HEK293 (cell line): ENCODE measurements at regions of chr7 and their contacts with region 1.

Region 1: GRCh38 chr7:45917658-45918057 is 3.4 kb downstream of the IGFBP3 start:
- H3K4me3 ChIP-seq: no peak overlapping the region
- H3K27ac ChIP-seq: no peak overlapping the region
- H3K4me1 ChIP-seq: no peaks in the 10 kb centered on the region; the same call in 1 of the 2 replicates
- CTCF ChIP-seq: peak; percentile 46; the same call in 1 of the 2 replicates

Region 2: DNA sequence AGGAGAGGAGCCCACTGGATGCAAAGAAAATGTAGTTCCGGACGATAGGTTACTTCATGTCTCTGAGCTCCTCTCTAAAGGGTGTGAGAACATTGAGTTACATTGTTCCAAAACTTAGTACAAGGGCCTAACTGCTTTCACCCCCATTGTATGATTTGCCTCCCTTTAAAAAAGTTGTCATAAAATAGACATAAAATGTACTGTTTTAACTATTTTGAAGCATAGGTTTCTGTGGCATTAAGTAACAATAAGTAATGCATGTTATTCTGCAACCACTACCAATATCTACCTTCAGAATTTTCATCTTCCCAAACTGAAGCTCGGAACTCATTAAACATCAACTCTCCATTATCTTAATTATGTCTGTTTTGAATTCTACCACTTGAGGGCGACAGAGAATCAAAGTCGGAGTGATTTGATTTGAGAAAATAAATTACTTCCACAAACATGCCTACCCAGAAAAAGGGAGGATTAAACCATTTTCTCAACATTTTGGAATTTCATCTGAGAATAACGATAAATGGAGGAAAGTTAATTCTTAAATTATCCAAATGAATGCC is 26.7 kb before region 1 on chr7:
- CTCF ChIA-PET with region 1: interaction called, 15 read pairs
- POLR2A ChIA-PET with region 1: no interaction called
- H3K4me3 ChIP-seq: no peak overlapping the region
- H3K27ac ChIP-seq: no peak overlapping the region
- H3K4me1 ChIP-seq: no peaks in the 10 kb centered on the region
- CTCF ChIP-seq: no peak

Region 3: GRCh38 chr7:45962861-45963260 is 45.2 kb after region 1 on chr7:
- CTCF ChIA-PET with region 1: interaction called, 10 read pairs
- POLR2A ChIA-PET with region 1: no interaction called
- H3K4me3 ChIP-seq: no peak overlapping the region
- H3K27ac ChIP-seq: no peak overlapping the region
- H3K4me1 ChIP-seq: no peaks in the 10 kb centered on the region
- CTCF ChIP-seq: no peak

Region 4: DNA sequence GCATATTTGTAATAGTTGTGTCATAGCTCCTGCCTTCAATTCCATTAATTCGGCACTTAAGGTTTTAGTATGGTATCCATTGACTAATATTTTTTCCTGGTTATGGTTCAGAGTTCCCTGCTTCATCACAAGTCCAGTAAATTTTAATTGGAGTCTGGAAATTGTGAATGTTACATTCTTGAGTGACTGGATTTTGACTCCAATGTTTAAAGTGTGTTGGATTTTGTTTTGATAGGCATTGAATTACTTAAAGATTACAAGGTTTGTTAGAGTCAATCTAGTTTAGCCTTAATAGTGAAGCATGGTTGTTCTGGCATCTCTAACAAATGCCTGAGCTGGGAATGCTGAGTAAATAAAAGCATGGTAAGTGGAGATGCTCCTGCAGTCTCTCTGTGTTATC is 330.0 kb after region 1 on chr7:
- CTCF ChIA-PET with region 1: no interaction called
- POLR2A ChIA-PET with region 1: no interaction called
- H3K4me3 ChIP-seq: no peak overlapping the region
- H3K27ac ChIP-seq: no peak overlapping the region
- H3K4me1 ChIP-seq: no peaks in the 10 kb centered on the region
- CTCF ChIP-seq: no peak

Region 5: DNA sequence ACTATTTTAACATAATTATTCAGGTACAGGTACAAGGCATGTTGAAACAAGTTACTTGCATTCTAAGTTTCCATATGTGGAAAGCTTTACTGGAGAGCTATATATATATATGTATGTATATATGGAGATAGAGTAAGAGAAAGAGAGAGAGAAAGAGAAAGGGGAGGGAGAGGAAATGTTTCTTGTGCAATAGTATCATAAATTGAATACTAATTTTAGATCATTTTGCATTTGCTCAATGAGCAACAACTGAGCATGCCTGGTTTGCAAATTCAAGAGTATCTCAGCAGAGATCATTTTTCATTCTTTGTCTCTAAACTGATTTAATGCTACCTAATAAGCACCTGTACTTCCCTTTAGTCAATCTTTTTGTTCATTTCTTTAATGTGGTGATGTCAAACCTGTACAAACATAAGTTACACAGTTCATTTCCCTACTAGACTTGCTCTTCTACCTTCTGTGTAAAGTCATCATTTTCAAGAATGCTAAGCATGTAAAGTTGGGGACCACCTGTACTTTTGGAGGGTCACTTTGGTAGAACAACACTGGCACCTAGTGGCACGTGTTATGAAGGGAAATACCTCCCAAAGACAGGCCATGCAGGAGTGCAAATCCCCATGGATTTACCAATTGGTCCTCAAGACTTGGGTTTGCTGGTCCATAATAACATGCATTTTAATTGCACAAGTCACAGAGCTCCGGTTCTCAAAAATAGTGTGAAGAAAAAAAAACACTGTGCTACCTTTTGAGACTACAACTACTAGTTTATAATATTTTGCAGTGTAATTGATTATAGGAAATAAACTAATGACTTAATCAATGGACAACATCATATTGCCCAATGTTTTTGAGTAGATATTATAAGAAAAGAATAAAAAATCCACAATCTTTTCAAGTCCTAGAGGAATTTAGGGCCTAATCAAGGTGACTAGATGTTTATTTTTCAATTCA is 434.6 kb after region 1 on chr7:
- CTCF ChIA-PET with region 1: interaction called, 26 read pairs
- POLR2A ChIA-PET with region 1: no interaction called
- H3K4me3 ChIP-seq: no peak overlapping the region
- H3K27ac ChIP-seq: no peak overlapping the region
- H3K4me1 ChIP-seq: no peaks in the 10 kb centered on the region
- CTCF ChIP-seq: 0 out of 2 replicates have a peak, but pooled peaks have one; percentile 29

Region 6: GRCh38 chr7:46603780-46604179 is 686.1 kb after region 1 on chr7:
- CTCF ChIA-PET with region 1: no interaction called
- POLR2A ChIA-PET with region 1: no interaction called
- H3K4me3 ChIP-seq: no peak overlapping the region
- H3K27ac ChIP-seq: no peak overlapping the region
- H3K4me1 ChIP-seq: peaks cover 6% of the 10 kb centered on the region
- CTCF ChIP-seq: no peak

Region 7: DNA sequence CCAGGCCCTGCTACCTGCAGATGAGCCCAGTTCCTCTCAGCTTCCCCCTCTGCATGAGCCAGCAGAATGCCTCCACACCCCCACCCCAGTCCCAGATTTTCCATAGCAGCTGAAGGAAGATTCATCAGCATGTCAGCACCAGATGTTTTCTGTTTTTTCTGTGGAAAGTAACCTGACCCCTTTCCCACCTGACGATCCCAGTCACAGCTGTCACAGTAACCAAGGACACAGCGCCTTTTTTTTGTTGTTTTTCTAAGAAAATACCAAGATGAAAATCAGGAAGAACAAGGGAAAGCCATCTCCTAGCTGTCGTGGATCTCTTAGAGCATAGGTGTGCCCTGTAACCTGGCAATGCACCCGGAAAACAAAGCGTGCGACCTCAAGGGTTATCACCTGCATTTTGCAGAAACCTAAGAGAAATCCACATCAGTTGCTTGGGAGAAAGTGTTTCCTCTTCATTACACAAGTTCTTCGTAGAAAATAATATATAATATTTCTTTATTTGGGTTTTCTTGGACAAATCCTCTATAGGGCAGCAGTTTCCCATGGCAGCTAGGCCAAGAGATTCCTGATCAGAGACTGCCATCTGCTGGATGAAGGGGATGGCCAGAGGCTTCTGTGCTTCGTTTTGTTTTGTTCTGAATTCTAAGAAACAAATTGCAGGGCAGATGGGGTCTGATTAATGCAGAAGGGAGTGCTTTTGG is 1262.3 kb after region 1 on chr7:
- CTCF ChIA-PET with region 1: interaction called, 11 read pairs
- POLR2A ChIA-PET with region 1: no interaction called
- H3K4me3 ChIP-seq: no peak overlapping the region
- H3K27ac ChIP-seq: no peak overlapping the region
- H3K4me1 ChIP-seq: no peaks in the 10 kb centered on the region
- CTCF ChIP-seq: 0 out of 2 replicates have a peak, but pooled peaks have one; percentile 12